Left cardiac atrium (tissue), 4 donors: ENCODE measurements at regions of chr16 and their contacts with region 1.

Region 1: DNA sequence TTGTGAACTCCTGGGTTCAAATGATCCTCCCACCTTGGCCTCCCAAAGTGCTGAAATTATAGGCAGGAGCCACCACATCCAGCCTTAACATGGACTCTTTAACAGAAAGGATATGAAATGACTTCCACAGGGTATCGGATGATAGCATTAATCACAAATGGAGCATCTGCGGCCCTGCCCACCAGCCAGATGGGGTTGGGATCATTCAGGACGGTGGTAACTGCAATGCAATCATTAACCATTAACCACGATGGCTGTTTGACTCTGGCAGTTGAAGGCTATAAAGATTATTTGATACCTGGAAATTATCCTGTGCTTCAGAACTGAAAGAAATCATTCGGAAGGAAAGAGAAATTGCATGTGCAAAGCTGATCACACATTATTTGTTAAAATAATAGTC is 5.3 kb upstream of the CHST5 start:
- DNase-seq: no peak
- ATAC-seq: no peak

Region 2: GRCh38 chr16:75471723-75472633 is 69.3 kb before region 1 on chr16:
- intact Hi-C with region 1: loop called in 1 of 2 experiments (anchors 10 kb)
- DNase-seq: peak; percentile 58
- ATAC-seq: peak; percentile 93 to 96